ENCODE measurements at regions of chr3 and their contacts with region 1.

Region 1: GRCh38 chr3:185076219-185076618 is 76.6 kb downstream of the C3orf70 start:
- DNase-seq: no peak
- H3K4me3 ChIP-seq: no peak overlapping the region
- H3K27ac ChIP-seq: no peak overlapping the region
- H3K4me1 ChIP-seq: no peaks in the 10 kb centered on the region
- H3K27me3 ChIP-seq: no peaks in the 10 kb centered on the region
- CTCF ChIP-seq: no peak

Region 2: GRCh38 chr3:185009650-185010049 is 66.6 kb before region 1 on chr3:
- CTCF ChIA-PET with region 1: no interaction called
- dilution Hi-C with region 1: no loop called
- in situ Hi-C with region 1: no loop called
- intact Hi-C with region 1: no loop called
- DNase-seq: no peak
- H3K4me3 ChIP-seq: no peak overlapping the region
- H3K27ac ChIP-seq: no peak overlapping the region
- H3K4me1 ChIP-seq: no peaks in the 10 kb centered on the region
- H3K27me3 ChIP-seq: no peaks in the 10 kb centered on the region
- CTCF ChIP-seq: no peak

Region 3: DNA sequence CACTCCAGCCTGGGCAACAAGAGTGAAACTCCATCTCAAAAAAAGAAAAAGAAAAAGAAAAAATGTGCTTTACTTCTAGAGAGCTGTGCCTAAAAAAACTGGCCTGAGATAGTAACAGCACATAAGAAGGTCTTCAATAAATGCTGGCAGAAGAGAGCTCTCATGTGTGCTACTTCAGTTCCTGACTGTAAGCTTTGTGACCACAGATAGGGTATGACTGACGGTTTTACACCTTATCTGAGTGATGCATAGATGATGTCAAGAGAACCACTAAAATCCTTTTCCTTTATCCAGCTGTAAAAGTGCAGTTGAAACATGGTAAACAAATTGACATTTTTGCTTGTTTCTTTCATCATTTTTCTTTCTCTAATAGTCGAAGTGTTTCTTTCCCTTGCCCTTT is 51.3 kb before region 1 on chr3:
- CTCF ChIA-PET with region 1: no interaction called
- dilution Hi-C with region 1: loop called (anchors 5 kb)
- in situ Hi-C with region 1: no loop called
- intact Hi-C with region 1: no loop called
- DNase-seq: no peak
- H3K4me3 ChIP-seq: no peak overlapping the region
- H3K27ac ChIP-seq: no peak overlapping the region
- H3K4me1 ChIP-seq: no peaks in the 10 kb centered on the region
- H3K27me3 ChIP-seq: no peaks in the 10 kb centered on the region
- CTCF ChIP-seq: no peak

Region 4: DNA sequence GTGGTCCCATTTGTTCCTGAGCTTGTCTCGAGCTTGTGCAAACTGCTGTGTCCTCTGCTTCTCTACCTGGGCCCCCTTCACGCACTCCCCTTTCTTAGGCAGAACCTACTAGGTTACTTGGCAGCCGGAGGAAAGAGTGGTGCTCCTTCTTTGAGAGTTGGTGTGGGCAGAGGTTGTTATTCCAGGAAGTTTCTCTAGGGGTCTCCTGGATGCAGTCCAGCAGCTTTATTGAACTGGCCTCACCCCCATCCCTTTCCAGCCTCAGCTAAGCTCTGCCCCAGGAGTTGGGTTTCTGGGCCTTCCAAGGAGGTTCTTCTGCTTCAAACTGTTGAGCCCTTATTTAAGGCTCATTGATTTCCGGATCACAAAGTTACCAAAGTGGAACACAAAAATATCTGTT is 26.5 kb before region 1 on chr3:
- CTCF ChIA-PET with region 1: no interaction called
- dilution Hi-C with region 1: no loop called
- in situ Hi-C with region 1: no loop called
- intact Hi-C with region 1: no loop called
- DNase-seq: no peak
- H3K4me3 ChIP-seq: no peak overlapping the region
- H3K27ac ChIP-seq: no peak overlapping the region
- H3K4me1 ChIP-seq: no peaks in the 10 kb centered on the region
- H3K27me3 ChIP-seq: no peaks in the 10 kb centered on the region
- CTCF ChIP-seq: no peak

Region 5: GRCh38 chr3:185152410-185153210 is 76.4 kb after region 1 on chr3 and contains the start of gene C3orf70:
- CTCF ChIA-PET with region 1: no interaction called
- dilution Hi-C with region 1: loop called (anchors 5 kb)
- in situ Hi-C with region 1: no loop called
- intact Hi-C with region 1: no loop called
- DNase-seq: peak; percentile 25
- H3K4me3 ChIP-seq: peak within 1 kb of the TSS; percentile 18 to 58 (median 32)
- H3K27ac ChIP-seq: no peak within 1 kb of the TSS
- H3K4me1 ChIP-seq: peaks cover 11% of the 10 kb centered on the region
- H3K27me3 ChIP-seq: peaks cover 50% of the 10 kb centered on the region
- CTCF ChIP-seq: no peak
- total RNA-seq, gene C3orf70: under 0.01 to 0.05 TPM